Caco-2 (cell line): ENCODE measurements at regions of chr14 and their contacts with region 1.

Region 1: DNA sequence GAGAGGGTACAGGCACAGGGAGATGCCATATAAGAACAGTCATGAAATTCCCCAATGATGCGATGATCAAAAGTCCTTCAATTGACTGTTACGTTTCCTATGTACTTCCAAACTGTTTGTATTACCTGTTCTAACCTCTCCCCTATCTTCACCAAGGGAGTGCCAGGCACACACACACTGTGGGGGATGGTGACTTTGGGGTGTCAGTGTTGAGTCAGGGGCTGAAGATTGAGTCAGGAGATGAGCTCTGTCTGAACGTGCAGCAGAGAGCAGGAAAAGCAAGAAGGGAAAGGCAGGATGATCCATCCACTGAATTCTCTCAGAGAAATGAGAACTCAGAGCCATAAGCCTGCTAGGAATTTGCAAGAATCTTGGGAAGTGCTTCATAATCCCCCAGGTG is 153.4 kb downstream of the EFCAB11 start:
- DNase-seq: no peak
- H3K4me3 ChIP-seq: no peak overlapping the region
- H3K4me3 Mint-ChIP-seq: no peak overlapping the region
- H3K27ac Mint-ChIP-seq: no peak overlapping the region
- H3K4me1 ChIP-seq: no peaks in the 10 kb centered on the region
- H3K4me1 Mint-ChIP-seq: no peaks in the 10 kb centered on the region
- H3K27me3 ChIP-seq: no peaks in the 10 kb centered on the region
- H3K27me3 Mint-ChIP-seq: no peaks in the 10 kb centered on the region
- CTCF ChIP-seq: no peak

Region 2: GRCh38 chr14:89779712-89780111 is 21.4 kb before region 1 on chr14:
- CTCF ChIA-PET with region 1: no interaction called
- POLR2A ChIA-PET with region 1: no interaction called
- intact Hi-C with region 1: loop called (anchors 2 kb)
- DNase-seq: no peak
- H3K4me3 ChIP-seq: no peak overlapping the region
- H3K4me3 Mint-ChIP-seq: no peak overlapping the region
- H3K27ac Mint-ChIP-seq: no peak overlapping the region
- H3K4me1 ChIP-seq: no peaks in the 10 kb centered on the region
- H3K4me1 Mint-ChIP-seq: no peaks in the 10 kb centered on the region
- H3K27me3 ChIP-seq: no peaks in the 10 kb centered on the region
- H3K27me3 Mint-ChIP-seq: no peaks in the 10 kb centered on the region
- CTCF ChIP-seq: no peak

Region 3: GRCh38 chr14:89955745-89956660 is 154.9 kb after region 1 on chr14 and contains the start of gene TDP1:
- CTCF ChIA-PET with region 1: no interaction called
- POLR2A ChIA-PET with region 1: no interaction called
- intact Hi-C with region 1: no loop called
- DNase-seq: peak; percentile 95
- H3K4me3 ChIP-seq: peak within 1 kb of the TSS; percentile 92
- H3K4me3 Mint-ChIP-seq: peak within 1 kb of the TSS; percentile 93
- H3K27ac Mint-ChIP-seq: peak within 1 kb of the TSS; percentile 97
- H3K4me1 ChIP-seq: peaks cover 8% of the 10 kb centered on the region
- H3K4me1 Mint-ChIP-seq: peaks cover 23% of the 10 kb centered on the region
- H3K27me3 ChIP-seq: no peaks in the 10 kb centered on the region
- H3K27me3 Mint-ChIP-seq: no peaks in the 10 kb centered on the region
- CTCF ChIP-seq: peak in 1 of 2 experiments; percentile 34
- total RNA-seq, gene TDP1: 29.0 and 29.2 TPM in 2 replicates